ENCODE measurements at regions of chr17 and their contacts with region 1.

Region 1: GRCh38 chr17:59521204-59522126 is 43.9 kb upstream of the DHX40 start:
- DNase-seq: no peak
- H3K4me3 ChIP-seq: no peak overlapping the region
- H3K27me3 ChIP-seq: peaks cover under 1% of the 10 kb centered on the region; the same call in 1 of the 2 replicates
- CTCF ChIP-seq: peak; percentile 89

Region 2: GRCh38 chr17:59534598-59534997 is 13.1 kb after region 1 on chr17:
- CTCF ChIA-PET with region 1: interaction called, 27 read pairs
- POLR2A ChIA-PET with region 1: no interaction called
- DNase-seq: no peak
- H3K4me3 ChIP-seq: no peak overlapping the region
- H3K27me3 ChIP-seq: 0 out of 2 replicates have a peak, but pooled peaks cover 3% of the 10 kb centered on the region
- CTCF ChIP-seq: no peak; the same call in 1 of the 2 replicates

Measured in BJ (cell line).